Cardiac septum (tissue), 1 donor: ENCODE measurements at regions of chr2 and their contacts with region 1.

Region 1: GRCh38 chr2:99066075-99066958 is 75.2 kb upstream of the C2orf15 start:
- DNase-seq: no peak

Region 2: DNA sequence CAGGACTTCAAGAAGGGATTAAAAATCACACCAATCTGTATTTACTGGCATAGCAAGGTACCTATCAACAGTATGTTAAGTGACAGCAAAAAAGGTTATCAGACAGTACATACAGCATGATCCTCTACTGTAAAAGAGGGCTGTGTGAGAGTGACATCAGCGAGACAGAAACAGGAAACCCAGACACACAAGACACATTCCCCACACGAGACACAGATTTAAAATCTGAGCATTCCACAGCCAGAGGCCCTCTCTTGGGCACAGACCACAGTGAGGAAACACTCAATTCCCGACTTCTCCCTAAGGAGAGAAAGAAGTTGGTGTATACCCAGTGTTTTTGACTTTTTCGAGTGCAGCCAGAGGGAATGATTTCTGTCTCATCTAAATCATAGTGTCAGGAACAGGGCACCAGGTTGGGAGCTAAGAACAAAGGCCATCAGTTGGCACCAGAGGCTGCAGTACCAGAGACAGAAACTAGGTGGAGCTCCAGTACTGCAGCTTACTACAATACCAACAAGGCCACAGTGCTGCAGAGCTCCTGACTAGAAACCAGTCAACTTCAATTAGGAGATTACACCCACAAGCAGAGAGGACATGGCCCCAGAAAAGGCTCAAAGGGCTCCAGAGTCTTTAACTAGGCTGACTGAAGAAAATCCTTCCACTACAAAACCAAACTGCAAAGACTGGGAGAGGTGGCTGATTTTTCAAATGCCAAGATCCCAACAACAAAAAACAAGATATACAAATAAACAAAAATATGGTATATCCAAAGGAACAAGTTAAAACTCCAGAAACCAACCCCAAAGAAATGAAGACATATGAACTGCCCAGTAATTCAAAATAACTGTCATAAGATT is 417.0 kb before region 1 on chr2:
- intact Hi-C with region 1: loop called (anchors 5 kb)
- DNase-seq: no peak